ENCODE measurements at regions of chr19 and their contacts with region 1.

Region 1: DNA sequence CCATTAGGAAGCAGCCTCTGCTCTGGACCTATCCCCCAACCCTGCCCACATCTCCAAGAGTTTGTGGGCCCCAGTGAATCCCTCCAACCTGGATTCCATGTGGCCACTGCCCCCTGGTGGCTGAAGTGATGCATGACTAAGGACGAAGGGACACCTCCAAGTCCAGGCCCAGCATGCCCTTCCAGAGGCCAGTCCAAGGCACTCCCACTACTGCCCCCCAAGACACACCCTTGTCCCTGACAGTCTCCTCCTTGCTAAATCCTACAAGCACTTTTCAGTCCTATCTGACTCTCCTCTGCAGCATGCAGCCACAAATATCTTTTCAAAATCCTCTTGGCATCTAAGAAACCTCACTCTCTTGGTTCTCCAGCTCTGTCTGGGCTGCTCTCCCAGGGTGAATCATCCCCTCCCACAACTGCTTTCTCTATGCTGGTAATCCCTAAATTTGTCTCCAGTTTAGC is 33.0 kb downstream of the DEDD2 start:
- DNase-seq: peak; percentile 72 to 80
- ATAC-seq: peak; percentile 46 to 78 (median 66)
- H3K4me3 ChIP-seq: no peak overlapping the region
- H3K27ac ChIP-seq: no peak overlapping the region
- H3K4me1 ChIP-seq: no peaks in the 10 kb centered on the region
- H3K27me3 ChIP-seq: peaks cover 3 to 39% (median 3%) of the 10 kb centered on the region in 3 donors
- CTCF ChIP-seq: peak; percentile 76

Region 2: GRCh38 chr19:42108527-42109389 is 75.7 kb before region 1 on chr19:
- intact Hi-C with region 1: loop called in 1 of 2 experiments (anchors 2 kb)
- DNase-seq: peak; percentile 75 to 80
- ATAC-seq: peak in 2 of 4 donors; percentile 54 to 69
- H3K4me3 ChIP-seq: no peak overlapping the region
- H3K27ac ChIP-seq: no peak overlapping the region
- H3K4me1 ChIP-seq: no peaks in the 10 kb centered on the region
- H3K27me3 ChIP-seq: peaks cover 0 to 9% (median 4%) of the 10 kb centered on the region in 3 donors
- CTCF ChIP-seq: peak; percentile 72

Region 3: GRCh38 chr19:42140125-42140754 is 44.2 kb before region 1 on chr19:
- intact Hi-C with region 1: no loop called
- DNase-seq: peak; percentile 41 to 68
- ATAC-seq: no peak
- H3K4me3 ChIP-seq: no peak overlapping the region
- H3K27ac ChIP-seq: no peak overlapping the region
- H3K4me1 ChIP-seq: no peaks in the 10 kb centered on the region
- H3K27me3 ChIP-seq: peaks cover 0 to 26% (median 2%) of the 10 kb centered on the region in 3 donors
- CTCF ChIP-seq: no peak

Measured in psoas muscle (tissue), 8 donors.